H1 (cell line): ENCODE measurements at regions of chr15 and their contacts with region 1.

Region 1: GRCh38 chr15:64067564-64068030 is 21.3 kb upstream of the DAPK2 start:
- DNase-seq: peak; percentile 25 to 93
- H3K4me3 ChIP-seq: no peak overlapping the region
- H3K27ac ChIP-seq: no peak overlapping the region
- H3K4me1 ChIP-seq: peaks cover 0 to 1% (median 0%) of the 10 kb centered on the region in 4 experiments; a peak in 2 of 7 replicates
- H3K27me3 ChIP-seq: no peaks in the 10 kb centered on the region
- CTCF ChIP-seq: peak in 2 of 3 experiments; percentile 73 to 88; a peak in 3 of 4 replicates
- EP300 ChIP-seq: no peak
- POLR2A ChIP-seq: no peak
- RAD21 ChIP-seq: peak; percentile 95 to 96

Region 2: GRCh38 chr15:63610200-63610841 is 457.3 kb before region 1 on chr15:
- CTCF ChIA-PET with region 1: interaction called, 37 read pairs
- POLR2A ChIA-PET with region 1: no interaction called
- DNase-seq: peak; percentile 43 to 70
- H3K4me3 ChIP-seq: no peak overlapping the region
- H3K27ac ChIP-seq: no peak overlapping the region
- H3K4me1 ChIP-seq: no peaks in the 10 kb centered on the region
- H3K27me3 ChIP-seq: no peaks in the 10 kb centered on the region
- CTCF ChIP-seq: peak; percentile 51 to 89 (median 69)
- EP300 ChIP-seq: no peak
- POLR2A ChIP-seq: no peak
- RAD21 ChIP-seq: peak; percentile 89 to 93

Region 3: DNA sequence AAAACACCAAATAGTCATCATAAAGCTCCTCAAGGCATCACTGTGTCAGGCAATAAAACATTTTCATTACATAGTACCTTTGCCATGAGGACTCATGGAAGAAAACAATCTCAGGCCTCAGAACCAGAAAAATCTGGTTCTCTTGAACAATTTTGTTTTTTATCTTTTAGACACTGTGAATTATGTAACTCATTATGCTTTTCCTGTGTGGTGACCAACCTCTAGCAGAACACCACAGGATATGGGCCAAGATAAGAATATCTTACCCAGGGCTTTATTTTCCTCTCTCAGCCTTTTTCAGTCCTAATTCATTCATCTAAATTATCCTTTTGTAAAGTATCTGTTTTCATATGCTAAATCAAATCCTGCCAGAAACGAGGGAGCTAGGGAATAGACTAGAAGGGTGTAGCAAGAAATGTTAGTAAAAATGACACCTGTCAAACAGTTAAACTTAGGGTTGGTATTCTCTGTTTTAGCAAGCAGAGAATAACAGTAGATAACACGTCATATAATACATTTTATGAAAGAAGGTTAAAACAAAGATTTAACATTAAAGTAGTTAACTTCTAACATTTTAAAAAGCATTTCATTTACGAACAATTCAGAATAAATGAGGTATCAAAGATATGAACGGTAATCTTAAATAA is 359.3 kb before region 1 on chr15:
- CTCF ChIA-PET with region 1: interaction called, 12 read pairs
- POLR2A ChIA-PET with region 1: no interaction called
- DNase-seq: no peak
- H3K4me3 ChIP-seq: no peak overlapping the region
- H3K27ac ChIP-seq: no peak overlapping the region
- H3K4me1 ChIP-seq: 0 out of 7 replicates have a peak, but pooled peaks cover 0 to 2% (median 0%) of the 10 kb centered on the region in 4 experiments
- H3K27me3 ChIP-seq: no peaks in the 10 kb centered on the region
- CTCF ChIP-seq: no peak
- EP300 ChIP-seq: no peak
- POLR2A ChIP-seq: no peak
- RAD21 ChIP-seq: no peak

Region 4: GRCh38 chr15:63986751-63987341 is 80.8 kb before region 1 on chr15:
- CTCF ChIA-PET with region 1: interaction called, 17 read pairs
- POLR2A ChIA-PET with region 1: no interaction called
- DNase-seq: no peak
- H3K4me3 ChIP-seq: no peak overlapping the region
- H3K27ac ChIP-seq: no peak overlapping the region
- H3K4me1 ChIP-seq: no peaks in the 10 kb centered on the region; a peak in 1 of 7 replicates
- H3K27me3 ChIP-seq: no peaks in the 10 kb centered on the region
- CTCF ChIP-seq: no peak
- EP300 ChIP-seq: no peak
- POLR2A ChIP-seq: no peak
- RAD21 ChIP-seq: no peak

Region 5: DNA sequence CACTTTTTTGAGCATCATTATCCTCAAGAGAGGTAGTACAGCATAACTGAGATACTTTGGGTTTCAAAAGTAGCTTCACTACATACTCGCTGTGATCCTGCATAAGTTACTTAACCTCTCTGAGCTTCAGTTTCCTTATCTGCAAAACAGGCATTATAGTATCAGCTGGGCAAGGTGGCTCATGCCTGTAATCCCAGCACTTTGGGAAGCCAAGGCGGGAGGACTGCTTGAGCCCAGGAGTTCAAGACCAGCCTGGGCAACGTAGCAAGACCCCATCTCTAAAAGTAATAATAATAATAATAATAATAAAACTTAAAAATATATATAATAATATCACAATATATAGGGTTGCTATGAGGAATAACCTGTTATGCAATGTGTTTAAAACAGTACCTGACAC is 15.2 kb after region 1 on chr15:
- CTCF ChIA-PET with region 1: interaction called, 21 read pairs
- POLR2A ChIA-PET with region 1: interaction called, 6 read pairs
- DNase-seq: no peak
- H3K4me3 ChIP-seq: no peak overlapping the region
- H3K27ac ChIP-seq: no peak overlapping the region
- H3K4me1 ChIP-seq: no peaks in the 10 kb centered on the region
- H3K27me3 ChIP-seq: no peaks in the 10 kb centered on the region
- CTCF ChIP-seq: no peak
- EP300 ChIP-seq: no peak
- POLR2A ChIP-seq: no peak
- RAD21 ChIP-seq: no peak